Ovary (tissue), 10 donors: ENCODE measurements at regions of chr17 and their contacts with region 1.

Region 1: GRCh38 chr17:79400989-79401703 is 209.7 kb downstream of the RBFOX3 start:
- DNase-seq: peak; percentile 33 to 82 (median 65)
- H3K4me3 ChIP-seq: peak overlapping the region; percentile 34
- H3K27ac ChIP-seq: no peak overlapping the region
- H3K4me1 ChIP-seq: no peaks in the 10 kb centered on the region
- H3K27me3 ChIP-seq: no peaks in the 10 kb centered on the region
- CTCF ChIP-seq: peak; percentile 34 to 88 (median 53)
- EP300 ChIP-seq: no peak
- POLR2A ChIP-seq: no peak

Region 2: GRCh38 chr17:79242873-79243602 is 158.1 kb before region 1 on chr17:
- intact Hi-C with region 1: no loop called
- DNase-seq: no peak
- H3K4me3 ChIP-seq: no peak overlapping the region
- H3K27ac ChIP-seq: no peak overlapping the region
- H3K4me1 ChIP-seq: no peaks in the 10 kb centered on the region
- H3K27me3 ChIP-seq: no peaks in the 10 kb centered on the region
- CTCF ChIP-seq: no peak
- EP300 ChIP-seq: no peak
- POLR2A ChIP-seq: no peak

Region 3: DNA sequence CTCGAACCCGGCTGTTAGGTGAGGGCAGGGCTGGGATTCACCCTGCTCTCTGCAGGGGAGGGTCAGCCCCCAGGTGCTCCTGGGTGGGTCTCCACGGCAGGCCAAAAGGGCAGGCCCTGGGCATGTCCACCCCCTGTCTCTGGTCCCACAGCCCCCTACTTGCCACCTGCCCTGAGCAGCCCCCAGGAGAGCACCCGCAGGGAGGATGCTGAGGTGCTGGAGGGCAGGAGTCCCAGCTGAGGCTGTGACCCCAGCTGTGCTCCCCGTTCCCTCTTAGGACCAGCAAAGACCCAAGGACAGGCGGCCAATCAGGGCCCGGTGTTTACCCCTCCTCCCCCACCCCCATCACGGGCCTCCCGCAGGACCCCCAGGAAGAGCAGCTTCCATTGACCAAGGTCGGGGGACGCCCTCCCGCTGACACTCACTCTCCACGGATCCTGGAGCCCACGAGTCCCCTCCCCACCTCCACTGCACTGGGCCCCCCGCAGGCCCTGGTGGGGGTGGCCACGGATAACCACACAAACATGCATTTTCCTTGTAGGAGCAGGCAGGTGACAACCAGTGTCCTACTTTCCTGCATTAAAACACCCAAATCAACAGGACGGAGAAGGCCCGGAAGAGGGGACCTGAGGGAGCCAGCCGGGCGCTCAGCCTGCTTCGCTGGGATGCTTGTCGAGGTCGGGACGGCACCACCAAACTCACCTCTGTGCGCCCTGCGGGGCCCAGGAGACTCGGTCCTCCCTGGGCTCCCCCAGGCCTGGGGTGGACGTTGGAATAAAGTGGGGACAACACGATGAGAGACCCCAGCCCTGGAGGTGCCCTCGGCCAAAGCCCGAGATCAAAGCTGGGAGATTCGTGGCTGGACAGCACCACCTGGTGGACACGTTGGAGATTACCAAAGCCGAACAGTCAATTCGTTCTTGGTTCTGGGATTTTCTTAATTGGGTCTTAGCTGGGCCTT is 307.1 kb after region 1 on chr17:
- intact Hi-C with region 1: loop called in 3 of 4 experiments (anchors 5 to 10 kb)
- DNase-seq: peak; percentile 33 to 77 (median 67)
- H3K4me3 ChIP-seq: peak overlapping the region; percentile 14
- H3K27ac ChIP-seq: no peak overlapping the region
- H3K4me1 ChIP-seq: peaks cover 6% of the 10 kb centered on the region
- H3K27me3 ChIP-seq: no peaks in the 10 kb centered on the region
- CTCF ChIP-seq: peak; percentile 55 to 78 (median 67)
- EP300 ChIP-seq: no peak
- POLR2A ChIP-seq: no peak